HEK293T (cell line): ENCODE measurements at regions of chr5 and their contacts with region 1.

Region 1: GRCh38 chr5:54492178-54492577 is 25.4 kb upstream of the SNX18 start:
- DNase-seq: no peak

Region 2: GRCh38 chr5:54243473-54244080 is 248.6 kb before region 1 on chr5:
- CTCF ChIA-PET with region 1: interaction called, 12 read pairs
- POLR2A ChIA-PET with region 1: no interaction called
- DNase-seq: peak; percentile 25